Mammary epithelial cell (primary cell): ENCODE measurements at regions of chr7 and their contacts with region 1.

Region 1: DNA sequence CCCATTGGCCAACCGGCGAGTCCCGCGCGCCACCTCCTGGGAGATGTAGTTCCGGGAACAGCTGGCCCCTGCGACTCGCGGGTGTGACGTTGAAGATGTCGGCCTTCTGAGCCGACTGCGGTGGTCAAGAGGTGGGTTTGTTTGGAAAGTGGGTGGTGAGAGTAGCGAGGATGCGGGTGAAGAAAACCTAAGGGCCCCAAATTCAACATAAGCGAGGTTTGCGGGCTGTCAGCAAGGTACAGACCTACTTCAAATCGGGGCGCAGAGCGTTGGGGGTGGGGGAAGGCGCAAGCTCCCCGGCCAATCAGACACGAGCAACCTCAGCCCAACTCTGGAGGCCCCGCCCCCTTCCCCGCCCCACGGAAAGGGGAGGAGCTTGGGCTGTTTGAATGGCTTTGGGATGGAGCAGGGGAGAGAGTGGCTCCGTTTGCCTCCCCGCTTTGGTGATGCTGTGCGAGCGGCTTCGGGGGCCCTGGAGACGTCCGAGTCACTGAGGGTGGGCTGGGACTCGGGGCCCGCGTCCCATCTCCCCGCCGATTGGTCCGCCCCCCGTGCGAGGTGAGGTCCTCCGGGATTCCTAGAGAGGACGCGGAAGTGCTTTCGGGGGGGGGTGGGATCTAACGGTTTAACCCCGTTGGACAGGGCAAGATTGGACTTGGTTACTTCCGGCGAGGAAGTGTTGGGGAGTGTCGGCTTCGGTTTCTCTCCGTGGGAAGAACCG is at the start of gene ZKSCAN5:
- DNase-seq: peak; percentile 96
- H3K4me3 ChIP-seq: peak within 1 kb of the TSS; percentile 82 to 97 (median 90)
- H3K27ac ChIP-seq: peak within 1 kb of the TSS; percentile 65
- H3K4me1 ChIP-seq: peaks cover 7% of the 10 kb centered on the region
- H3K27me3 ChIP-seq: no peaks in the 10 kb centered on the region
- CTCF ChIP-seq: peak in 1 of 2 donors; percentile 9
- total RNA-seq, gene ZKSCAN5: 11.7 to 11.9 TPM

Region 2: GRCh38 chr7:99325545-99326407 is 179.0 kb before region 1 on chr7 and contains the start of gene ARPC1A:
- CTCF ChIA-PET with region 1: no interaction called
- dilution Hi-C with region 1: no loop called
- in situ Hi-C with region 1: no loop called
- intact Hi-C with region 1: no loop called
- DNase-seq: peak; percentile 92
- H3K4me3 ChIP-seq: peak within 1 kb of the TSS; percentile 66 to 85 (median 76)
- H3K27ac ChIP-seq: peak within 1 kb of the TSS; percentile 79
- H3K4me1 ChIP-seq: peaks cover 33% of the 10 kb centered on the region
- H3K27me3 ChIP-seq: no peaks in the 10 kb centered on the region
- CTCF ChIP-seq: peak in 1 of 2 donors; percentile 35
- total RNA-seq, gene ARPC1A: 177 to 218 TPM

Region 3: DNA sequence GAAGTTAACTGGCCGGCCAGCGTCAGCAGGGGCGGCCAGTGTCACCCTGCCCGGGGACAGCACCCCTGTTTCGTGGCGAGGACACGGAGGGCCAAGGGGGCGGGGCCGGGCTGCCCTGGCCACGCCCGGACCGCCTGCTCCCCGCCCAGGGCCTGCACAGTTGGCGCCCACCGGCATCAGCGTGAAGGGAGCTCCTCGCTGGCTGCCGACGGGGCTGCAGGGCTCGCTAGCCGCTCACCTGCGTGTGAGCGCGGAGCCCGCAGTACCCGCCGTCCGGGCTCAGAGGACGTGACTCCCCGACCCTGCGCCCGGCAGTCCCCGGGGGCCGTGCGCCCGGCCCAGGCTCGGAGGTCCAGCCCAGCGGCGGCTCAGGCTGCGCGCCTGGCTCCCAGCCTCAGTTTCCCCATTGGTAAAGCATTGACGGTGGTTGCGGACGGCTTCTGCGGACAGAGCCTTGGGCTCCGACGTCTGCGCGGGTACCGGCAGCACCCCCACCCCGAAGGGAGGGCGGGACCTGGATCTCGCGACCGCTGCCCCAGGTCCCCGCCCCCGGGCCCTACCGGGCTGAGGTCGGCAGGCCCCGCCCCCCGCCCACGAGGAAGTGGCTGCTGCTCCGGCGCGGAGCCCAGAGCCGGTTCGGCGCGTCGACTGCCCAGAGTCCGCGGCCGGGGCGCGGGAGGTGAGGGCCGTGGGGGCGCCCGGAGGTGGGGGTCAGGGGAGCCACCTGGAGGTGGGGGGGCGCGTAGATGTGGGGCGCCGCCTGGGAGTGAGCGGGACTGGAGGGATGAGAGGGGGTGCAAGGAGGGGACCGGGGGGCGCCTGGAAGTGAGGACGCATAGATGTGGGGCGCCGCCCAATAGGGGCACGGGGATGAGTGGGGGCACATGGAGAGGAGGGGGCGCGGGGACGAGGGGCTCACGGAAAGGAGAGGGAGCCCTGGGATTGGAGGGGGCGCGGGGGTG is 130.4 kb before region 1 on chr7 and contains the start of gene ARPC1B:
- CTCF ChIA-PET with region 1: no interaction called
- dilution Hi-C with region 1: no loop called
- in situ Hi-C with region 1: no loop called
- intact Hi-C with region 1: no loop called
- DNase-seq: peak; percentile 71
- H3K4me3 ChIP-seq: peak within 1 kb of the TSS; percentile 64 to 82 (median 79)
- H3K27ac ChIP-seq: peak within 1 kb of the TSS; percentile 53
- H3K4me1 ChIP-seq: peaks cover 27% of the 10 kb centered on the region
- H3K27me3 ChIP-seq: no peaks in the 10 kb centered on the region
- CTCF ChIP-seq: no peak
- total RNA-seq, gene ARPC1B: 196 to 228 TPM

Region 4: GRCh38 chr7:99459087-99459486 is 45.7 kb before region 1 on chr7:
- CTCF ChIA-PET with region 1: no interaction called
- dilution Hi-C with region 1: no loop called
- in situ Hi-C with region 1: no loop called
- intact Hi-C with region 1: no loop called
- DNase-seq: no peak
- H3K4me3 ChIP-seq: no peak overlapping the region
- H3K27ac ChIP-seq: no peak overlapping the region
- H3K4me1 ChIP-seq: peaks cover 14% of the 10 kb centered on the region
- H3K27me3 ChIP-seq: no peaks in the 10 kb centered on the region
- CTCF ChIP-seq: peak in 1 of 2 donors; percentile 36

Region 5: GRCh38 chr7:99472561-99473243 is 32.1 kb before region 1 on chr7 and contains the start of gene ZNF789:
- CTCF ChIA-PET with region 1: no interaction called
- dilution Hi-C with region 1: no loop called
- in situ Hi-C with region 1: no loop called
- intact Hi-C with region 1: loop called (anchors 1 kb)
- DNase-seq: peak; percentile 96
- H3K4me3 ChIP-seq: peak within 1 kb of the TSS; percentile 76 to 98 (median 77)
- H3K27ac ChIP-seq: peak within 1 kb of the TSS; percentile 65
- H3K4me1 ChIP-seq: peaks cover 4% of the 10 kb centered on the region
- H3K27me3 ChIP-seq: no peaks in the 10 kb centered on the region
- CTCF ChIP-seq: no peak
- total RNA-seq, gene ZNF789: 6.0 to 8.6 TPM

Region 6: GRCh38 chr7:99551767-99552463 is 47.2 kb after region 1 on chr7 and contains the start of gene FAM200A:
- CTCF ChIA-PET with region 1: no interaction called
- dilution Hi-C with region 1: no loop called
- in situ Hi-C with region 1: no loop called
- intact Hi-C with region 1: loop called (anchors 1 kb)
- DNase-seq: peak; percentile 86
- H3K4me3 ChIP-seq: peak within 1 kb of the TSS; percentile 82 to 99 (median 96)
- H3K27ac ChIP-seq: peak within 1 kb of the TSS; percentile 80
- H3K4me1 ChIP-seq: peaks cover 3% of the 10 kb centered on the region
- H3K27me3 ChIP-seq: no peaks in the 10 kb centered on the region
- CTCF ChIP-seq: no peak
- total RNA-seq, gene FAM200A: 4.6 to 7.8 TPM

Region 7: DNA sequence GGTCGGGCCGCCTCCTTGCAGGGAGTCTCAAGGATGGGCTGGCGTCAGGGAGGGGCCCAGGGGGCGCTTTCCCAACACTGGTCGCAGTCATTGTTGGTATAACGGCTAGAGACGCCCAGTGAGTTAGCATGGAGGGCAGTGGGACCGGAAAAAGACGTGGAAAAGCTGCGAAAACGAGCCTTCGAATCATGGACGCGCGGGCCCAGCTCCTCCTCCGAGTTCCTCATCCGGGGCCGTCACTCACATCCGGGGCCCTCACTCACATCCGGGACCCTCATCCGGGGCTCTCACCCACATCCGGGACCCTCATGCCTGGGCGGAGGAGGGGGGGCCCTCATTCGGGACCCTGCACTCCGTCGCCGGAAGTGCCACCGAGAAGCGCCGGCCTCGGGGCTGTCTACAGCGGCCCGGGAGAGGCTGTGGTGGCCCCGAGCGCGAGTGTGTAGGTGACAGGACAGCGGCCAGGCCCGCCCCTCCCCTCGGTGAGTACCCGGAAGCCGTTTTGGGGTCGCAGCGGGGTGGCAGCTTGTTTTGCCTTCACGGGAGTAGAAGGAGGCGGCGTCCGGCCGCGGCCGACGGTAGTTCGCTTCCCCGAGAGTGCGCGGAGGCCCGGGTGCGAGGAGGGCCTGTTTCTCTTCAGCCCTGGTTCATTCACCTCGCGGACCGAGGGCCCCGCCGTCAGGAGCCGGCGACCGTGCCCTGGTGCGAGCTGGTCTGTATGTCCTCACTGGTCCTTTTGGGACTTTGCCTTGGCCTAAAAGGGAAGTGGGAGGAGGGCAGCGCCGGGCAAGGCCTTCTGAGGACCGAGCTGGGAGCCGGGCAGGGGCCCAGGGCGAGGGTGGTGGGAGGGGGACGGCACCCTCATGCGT is 53.8 kb after region 1 on chr7 and contains the start of gene ZNF655:
- CTCF ChIA-PET with region 1: no interaction called
- dilution Hi-C with region 1: no loop called
- in situ Hi-C with region 1: loop called in 1 of 2 experiments (anchors 5 kb)
- intact Hi-C with region 1: no loop called
- DNase-seq: peak; percentile 73
- H3K4me3 ChIP-seq: peak within 1 kb of the TSS; percentile 78 to 81 (median 81)
- H3K27ac ChIP-seq: peak within 1 kb of the TSS; percentile 73
- H3K4me1 ChIP-seq: peaks cover 43% of the 10 kb centered on the region
- H3K27me3 ChIP-seq: no peaks in the 10 kb centered on the region
- CTCF ChIP-seq: no peak
- total RNA-seq, gene ZNF655: 64.5 to 66.0 TPM

Region 8: GRCh38 chr7:99752390-99752789 is 247.6 kb after region 1 on chr7:
- CTCF ChIA-PET with region 1: no interaction called
- dilution Hi-C with region 1: no loop called
- in situ Hi-C with region 1: no loop called
- intact Hi-C with region 1: no loop called
- DNase-seq: no peak
- H3K4me3 ChIP-seq: no peak overlapping the region
- H3K27ac ChIP-seq: no peak overlapping the region
- H3K4me1 ChIP-seq: peaks cover 30% of the 10 kb centered on the region
- H3K27me3 ChIP-seq: no peaks in the 10 kb centered on the region
- CTCF ChIP-seq: no peak